Posterior vena cava (tissue), 2 donors: ENCODE measurements at regions of chr11 and their contacts with region 1.

Region 1: DNA sequence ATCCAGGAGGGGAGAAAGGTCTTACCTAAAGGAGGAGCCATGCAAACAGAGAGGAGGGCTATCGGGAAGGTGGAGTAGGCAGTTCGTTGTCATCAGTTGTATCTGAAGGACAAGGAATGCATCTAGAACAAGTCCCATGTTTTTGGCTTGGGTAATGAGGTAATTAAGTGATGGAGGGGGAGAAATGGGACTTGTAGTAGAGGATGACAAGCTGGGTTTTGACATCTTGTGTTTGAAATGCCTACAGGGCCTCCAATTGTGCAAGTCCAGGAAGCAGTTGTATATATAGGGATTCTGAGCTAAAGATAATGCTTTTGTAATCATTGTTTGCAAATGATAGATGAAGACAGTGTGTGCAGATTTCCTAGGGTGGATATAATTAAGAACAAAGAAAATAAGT is 622.8 kb downstream of the NTM start:
- DNase-seq: no peak

Region 2: GRCh38 chr11:131811383-131811782 is 181.9 kb before region 1 on chr11:
- intact Hi-C with region 1: loop called in 1 of 2 experiments (anchors 5 kb)
- DNase-seq: no peak